H1 (cell line): ENCODE measurements at regions of chr19 and their contacts with region 1.

Region 1: DNA sequence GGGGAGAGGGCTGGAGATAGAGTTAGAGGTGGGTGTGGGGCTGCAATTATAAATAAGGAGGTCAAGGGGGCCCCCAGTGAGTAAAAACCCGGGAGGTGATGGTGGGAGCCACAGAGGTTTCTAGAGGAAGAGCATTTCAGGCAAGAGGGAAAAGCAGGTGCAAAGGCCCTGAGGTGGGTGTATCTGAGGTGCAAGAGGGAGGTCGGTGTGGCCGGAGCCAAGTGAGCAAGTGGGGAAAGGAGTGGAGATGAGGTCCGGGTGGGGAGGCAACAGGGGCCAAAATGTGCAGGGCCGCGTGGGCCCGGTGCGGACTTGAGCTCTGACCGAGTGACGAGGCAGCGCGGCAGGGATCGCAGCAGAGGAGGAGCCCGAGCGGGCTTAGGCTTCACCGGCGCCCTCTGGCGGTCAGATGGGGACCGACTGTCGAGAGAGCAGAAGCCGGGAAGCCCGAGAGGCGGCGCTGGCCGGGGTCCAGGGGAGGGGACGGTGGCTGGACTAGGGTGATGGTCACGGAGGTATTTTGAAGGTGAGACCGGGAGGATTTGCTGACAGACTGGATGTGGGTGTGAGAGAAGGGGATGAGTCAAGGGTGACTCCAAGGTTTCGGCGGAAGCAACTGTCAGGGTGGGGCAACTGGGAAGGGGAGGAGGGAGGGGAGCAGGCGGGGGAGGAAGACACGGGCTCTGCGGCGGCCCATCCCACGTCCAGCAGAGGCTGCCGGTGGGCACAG is 17.7 kb upstream of the SPACA4 start:
- DNase-seq: peak; percentile 79 to 99
- H3K4me3 ChIP-seq: peak overlapping the region; percentile 29 to 58 (median 40); a peak in 7 of 8 replicates
- H3K27ac ChIP-seq: no peak overlapping the region
- H3K4me1 ChIP-seq: peaks cover 0 to 7% (median 1%) of the 10 kb centered on the region in 4 experiments; a peak in 4 of 7 replicates
- H3K27me3 ChIP-seq: peaks cover 0 to 7% (median 1%) of the 10 kb centered on the region in 4 experiments; a peak in 2 of 7 replicates
- CTCF ChIP-seq: peak; percentile 90 to 99 (median 98)
- EP300 ChIP-seq: no peak
- POLR2A ChIP-seq: no peak
- RAD21 ChIP-seq: peak; percentile 57 to 71

Region 2: GRCh38 chr19:48492925-48493717 is 95.7 kb before region 1 on chr19:
- CTCF ChIA-PET with region 1: interaction called, 105 read pairs
- POLR2A ChIA-PET with region 1: interaction called, 43 read pairs
- DNase-seq: peak; percentile 95 to 98
- H3K4me3 ChIP-seq: peak overlapping the region; percentile 58 to 80 (median 66)
- H3K27ac ChIP-seq: peak overlapping the region; percentile 80; the same call in 1 of the 2 replicates
- H3K4me1 ChIP-seq: peaks cover 0 to 21% (median 15%) of the 10 kb centered on the region in 4 experiments; a peak in 6 of 7 replicates
- H3K27me3 ChIP-seq: peaks cover 0 to 3% (median 0%) of the 10 kb centered on the region in 4 experiments; a peak in 3 of 7 replicates
- CTCF ChIP-seq: no peak
- EP300 ChIP-seq: no peak
- POLR2A ChIP-seq: peak; percentile 39 to 53; a peak in 2 of 3 replicates
- RAD21 ChIP-seq: no peak

Region 3: GRCh38 chr19:48513289-48514122 is 75.3 kb before region 1 on chr19:
- CTCF ChIA-PET with region 1: interaction called, 353 read pairs
- POLR2A ChIA-PET with region 1: interaction called, 4 read pairs
- DNase-seq: peak in 1 of 2 experiments; percentile 87
- H3K4me3 ChIP-seq: peak overlapping the region; percentile 51 to 81 (median 69)
- H3K27ac ChIP-seq: no peak overlapping the region
- H3K4me1 ChIP-seq: peaks cover 0 to 23% (median 12%) of the 10 kb centered on the region in 4 experiments; a peak in 5 of 7 replicates
- H3K27me3 ChIP-seq: peaks cover 0 to 12% (median 9%) of the 10 kb centered on the region in 4 experiments; a peak in 4 of 7 replicates
- CTCF ChIP-seq: peak in 1 of 3 experiments; percentile 1; a peak in 1 of 4 replicates
- EP300 ChIP-seq: no peak
- POLR2A ChIP-seq: no peak; a peak in 1 of 3 replicates
- RAD21 ChIP-seq: no peak

Region 4: GRCh38 chr19:48568345-48568886 is 20.4 kb before region 1 on chr19:
- CTCF ChIA-PET with region 1: interaction called, 35 read pairs
- POLR2A ChIA-PET with region 1: interaction called, 9 read pairs
- DNase-seq: peak in 1 of 2 experiments; percentile 68
- H3K4me3 ChIP-seq: peak overlapping the region in 3 of 4 experiments; percentile 10 to 50 (median 14); a peak in 4 of 8 replicates
- H3K27ac ChIP-seq: no peak overlapping the region; the same call in 1 of the 2 replicates
- H3K4me1 ChIP-seq: peaks cover 0 to 8% (median 3%) of the 10 kb centered on the region in 4 experiments; a peak in 5 of 7 replicates
- H3K27me3 ChIP-seq: no peaks in the 10 kb centered on the region; a peak in 2 of 7 replicates
- CTCF ChIP-seq: peak in 1 of 3 experiments; percentile 7; a peak in 2 of 4 replicates
- EP300 ChIP-seq: no peak
- POLR2A ChIP-seq: peak in 1 of 2 experiments; percentile 47; a peak in 1 of 3 replicates
- RAD21 ChIP-seq: no peak

Region 5: DNA sequence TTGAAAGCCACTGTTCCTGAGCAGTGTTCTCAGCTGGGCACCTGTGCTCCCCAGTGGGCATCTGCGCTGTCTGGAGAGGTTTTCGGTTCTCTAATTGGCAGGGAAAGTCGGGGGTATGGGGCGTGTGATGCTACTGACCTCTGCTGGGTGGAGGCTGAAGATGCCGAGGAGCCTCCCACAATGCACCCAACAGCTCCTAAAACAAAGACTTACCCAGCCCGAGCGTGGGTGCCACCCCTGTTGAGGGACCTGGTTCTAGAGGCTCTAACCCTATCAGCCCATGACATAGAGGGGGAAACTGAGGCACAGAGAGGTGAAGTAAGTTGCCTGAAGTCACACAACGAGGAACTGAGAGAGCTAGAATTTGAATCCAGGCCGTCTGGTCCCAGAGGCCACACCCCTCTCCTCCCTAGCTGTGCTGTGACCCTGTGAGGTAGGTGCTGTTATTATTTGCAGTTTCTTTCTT is 20.0 kb after region 1 on chr19:
- CTCF ChIA-PET with region 1: interaction called, 143 read pairs
- POLR2A ChIA-PET with region 1: interaction called, 175 read pairs
- DNase-seq: peak in 1 of 2 experiments; percentile 76
- H3K4me3 ChIP-seq: no peak overlapping the region
- H3K27ac ChIP-seq: no peak overlapping the region
- H3K4me1 ChIP-seq: peaks cover 0 to 6% (median 2%) of the 10 kb centered on the region in 4 experiments; a peak in 4 of 7 replicates
- H3K27me3 ChIP-seq: no peaks in the 10 kb centered on the region
- CTCF ChIP-seq: peak; percentile 78 to 87 (median 81)
- EP300 ChIP-seq: no peak
- POLR2A ChIP-seq: no peak
- RAD21 ChIP-seq: peak; percentile 77 to 87